Activated naive CD4-positive, alpha-beta T cell treated with anti-CD3 and anti-CD28 coated beads, Interleukin-2, amount 10 ng/mL, durations not matched to agents 7 days and 5 days (primary cell): ENCODE measurements at regions of chr5 and their contacts with region 1.

Region 1: DNA sequence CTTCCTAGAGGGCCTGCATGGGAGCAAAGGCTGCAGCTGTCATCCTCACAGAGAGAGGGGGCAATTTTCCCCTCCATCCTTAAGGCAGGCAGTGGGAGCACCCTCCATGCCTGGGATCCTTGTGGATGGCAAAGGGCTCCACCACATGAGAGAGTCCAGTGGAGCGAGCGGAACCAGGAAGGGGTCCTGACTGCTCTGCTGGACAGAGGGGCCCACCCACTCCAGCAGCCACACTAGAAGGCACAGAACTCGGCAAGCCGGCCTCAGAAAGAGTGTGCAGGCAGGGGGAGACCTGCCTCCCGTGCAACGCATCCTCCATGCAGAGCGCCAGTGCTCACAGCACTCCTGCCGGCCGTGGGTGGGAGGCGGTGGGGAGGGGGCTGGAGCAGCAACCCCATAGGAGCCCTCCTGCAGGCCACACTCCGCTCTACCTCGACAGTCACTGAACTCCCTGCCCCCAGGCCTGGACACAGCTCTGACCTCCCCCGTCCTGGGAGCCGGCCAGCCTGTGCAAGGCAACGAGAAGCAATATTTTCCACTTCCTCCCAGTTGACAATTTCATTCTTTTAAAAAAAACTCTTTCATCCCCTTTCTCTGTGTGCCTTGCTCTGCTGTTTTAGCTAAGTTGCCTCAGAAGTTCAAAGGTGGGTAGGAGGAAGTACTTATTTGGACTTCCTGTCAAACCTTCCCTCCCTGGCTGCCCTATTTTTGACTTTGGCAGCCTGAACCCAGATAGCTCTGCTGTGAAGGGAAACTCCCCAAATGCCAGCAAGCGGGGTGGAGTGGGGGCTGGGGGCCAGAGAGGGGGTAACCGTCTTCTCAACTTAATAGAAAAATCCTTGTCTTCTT is 5.3 kb upstream of the LCP2 start:
- DNase-seq: peak; percentile 83
- H3K4me3 Mint-ChIP-seq: peak overlapping the region; percentile 75
- H3K27ac Mint-ChIP-seq: peak overlapping the region; percentile 94
- H3K4me1 Mint-ChIP-seq: peaks cover 85% of the 10 kb centered on the region
- H3K27me3 Mint-ChIP-seq: no peaks in the 10 kb centered on the region

Region 2: GRCh38 chr5:170267431-170268152 is 35.3 kb before region 1 on chr5:
- CTCF ChIA-PET with region 1: interaction called, 465 read pairs
- DNase-seq: peak; percentile 87
- H3K4me3 Mint-ChIP-seq: peak overlapping the region; percentile 40
- H3K27ac Mint-ChIP-seq: peak overlapping the region; percentile 87
- H3K4me1 Mint-ChIP-seq: peaks cover 92% of the 10 kb centered on the region
- H3K27me3 Mint-ChIP-seq: no peaks in the 10 kb centered on the region

Region 3: DNA sequence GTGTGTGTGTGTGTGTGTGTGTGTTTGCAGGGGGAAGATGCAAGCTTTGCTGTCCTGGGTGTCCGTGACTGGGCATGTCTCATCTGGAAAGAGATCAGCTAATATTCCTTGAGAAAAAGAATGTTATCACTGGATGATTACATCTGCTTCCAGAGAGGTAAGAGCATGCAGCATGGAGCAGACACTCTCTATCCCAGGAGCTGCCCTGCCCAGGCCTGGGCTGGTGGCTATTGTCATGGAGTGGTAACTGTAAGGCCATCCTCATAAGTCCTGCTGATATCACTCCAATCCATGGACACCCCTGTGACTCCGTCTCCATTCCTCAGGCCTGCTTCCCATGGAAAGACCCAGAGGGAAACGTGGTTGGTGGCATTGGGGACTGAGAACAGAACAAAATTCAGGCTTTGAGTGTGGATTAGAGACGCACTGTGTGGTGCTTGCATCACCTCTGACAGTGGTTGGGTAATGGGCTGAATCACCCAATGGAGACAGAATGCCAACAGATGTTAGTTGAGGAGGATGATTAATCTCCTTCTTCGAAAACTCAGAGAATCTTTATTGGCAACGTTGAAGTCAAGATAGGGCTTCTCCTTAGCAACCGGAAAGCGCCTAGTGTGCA is 149.0 kb after region 1 on chr5:
- CTCF ChIA-PET with region 1: no interaction called
- DNase-seq: no peak
- H3K4me3 Mint-ChIP-seq: no peak overlapping the region
- H3K27ac Mint-ChIP-seq: no peak overlapping the region
- H3K4me1 Mint-ChIP-seq: peaks cover 15% of the 10 kb centered on the region
- H3K27me3 Mint-ChIP-seq: peaks cover 43% of the 10 kb centered on the region